Heart left ventricle (tissue), 16 donors: ENCODE measurements at regions of chr3 and their contacts with region 1.

Region 1: DNA sequence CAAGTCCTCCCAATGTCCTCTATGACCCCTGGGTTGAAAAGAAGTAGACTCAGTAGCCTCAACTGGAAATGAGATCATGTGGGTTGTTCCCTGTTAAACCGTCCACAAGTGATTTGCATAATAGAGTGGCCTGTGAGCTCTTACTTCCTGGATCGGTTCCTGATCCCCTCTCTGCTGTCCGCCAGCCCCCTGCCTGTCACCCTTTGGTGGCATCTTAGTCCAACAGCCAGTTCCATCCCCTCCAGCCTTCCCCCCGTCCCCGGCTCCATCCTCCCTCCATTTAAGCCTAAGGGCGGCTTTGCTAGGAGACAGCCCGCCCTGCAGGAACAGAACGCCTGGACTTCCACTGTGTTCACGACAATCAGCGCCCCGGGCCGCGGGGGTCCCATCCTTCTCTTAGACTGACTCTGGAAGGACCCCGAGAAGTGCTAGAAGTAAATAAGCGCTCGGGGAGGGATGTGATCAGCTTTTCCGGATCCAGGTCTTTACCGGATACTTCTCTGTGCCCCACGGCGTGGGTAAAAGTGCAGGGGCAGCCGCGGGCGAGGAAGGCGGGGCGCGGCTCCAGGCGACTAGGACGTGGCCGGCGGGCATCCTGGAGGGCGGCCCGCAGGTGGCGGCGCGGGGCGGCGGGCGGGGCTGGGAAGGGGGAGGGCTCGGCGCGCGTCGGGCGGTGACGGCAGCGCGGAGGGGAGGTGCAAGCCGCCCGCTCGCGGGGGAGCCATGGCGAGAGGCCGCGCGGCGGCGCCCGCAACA is 51.2 kb upstream of the ULK4 start:
- DNase-seq: peak; percentile 79 to 91 (median 84)
- ATAC-seq: peak; percentile 50 to 88 (median 80)
- H3K4me3 ChIP-seq: peak overlapping the region; percentile 28 to 99 (median 93)
- H3K27ac ChIP-seq: peak overlapping the region; percentile 88 to 97 (median 94)
- H3K4me1 ChIP-seq: peaks cover 0 to 51% (median 35%) of the 10 kb centered on the region in 12 donors
- H3K27me3 ChIP-seq: no peaks in the 10 kb centered on the region
- CTCF ChIP-seq: no peak
- POLR2A ChIP-seq: no peak

Region 2: GRCh38 chr3:41900265-41900664 is 112.8 kb before region 1 on chr3:
- intact Hi-C with region 1: loop called in 2 of 10 experiments (anchors 5 to 10 kb)
- DNase-seq: no peak
- ATAC-seq: no peak
- H3K4me3 ChIP-seq: no peak overlapping the region
- H3K27ac ChIP-seq: no peak overlapping the region
- H3K4me1 ChIP-seq: peaks cover 0 to 8% (median 0%) of the 10 kb centered on the region in 12 donors
- H3K27me3 ChIP-seq: no peaks in the 10 kb centered on the region
- CTCF ChIP-seq: no peak
- POLR2A ChIP-seq: no peak

Region 3: GRCh38 chr3:41961750-41962679 is 51.1 kb before region 1 on chr3 and contains the start of gene ULK4:
- intact Hi-C with region 1: loop called in 9 of 10 experiments (anchors 2 to 10 kb)
- DNase-seq: peak; percentile 97 to 99 (median 98)
- ATAC-seq: peak; percentile 98
- H3K4me3 ChIP-seq: peak within 1 kb of the TSS; percentile 75 to 98 (median 88)
- H3K27ac ChIP-seq: peak within 1 kb of the TSS in 11 of 12 donors; percentile 52 to 86 (median 75)
- H3K4me1 ChIP-seq: peaks cover 0 to 15% (median 9%) of the 10 kb centered on the region in 12 donors
- H3K27me3 ChIP-seq: no peaks in the 10 kb centered on the region
- CTCF ChIP-seq: no peak
- POLR2A ChIP-seq: peak in 1 of 2 donors; percentile 60
- total RNA-seq, gene ULK4: 1.8 to 6.1 (median 3.7) TPM

Region 4: DNA sequence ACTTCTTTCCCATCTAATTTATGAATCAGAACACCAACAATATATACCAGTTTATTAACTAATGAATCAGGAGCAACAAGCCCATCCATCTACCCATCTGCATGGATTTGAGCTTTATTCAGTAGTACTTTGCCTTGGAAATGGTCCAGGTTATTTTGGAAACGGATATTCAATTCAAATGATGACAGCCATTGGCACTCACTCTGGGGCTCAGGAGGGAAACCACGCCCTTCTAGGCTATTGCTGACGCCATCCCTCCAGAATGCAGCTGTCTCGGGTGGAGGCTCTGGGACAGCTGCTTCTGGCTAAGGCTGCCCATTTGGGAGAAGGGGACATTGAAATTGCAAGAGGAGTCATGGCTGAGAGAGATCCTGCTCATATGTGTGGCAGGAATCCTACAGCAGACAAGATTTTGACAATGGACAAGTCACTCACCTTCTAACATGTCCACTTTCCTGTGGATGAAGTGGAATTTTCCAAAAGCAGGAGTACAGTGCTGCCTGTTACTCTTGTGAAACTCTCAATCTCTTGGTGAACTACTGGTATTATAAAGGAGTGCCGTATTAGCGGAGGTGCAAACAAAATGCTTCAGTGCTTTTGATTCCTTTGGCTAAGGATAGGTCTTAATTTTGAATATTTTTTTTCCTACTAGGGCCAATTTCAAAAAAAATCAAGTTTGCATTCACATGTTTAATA is 48.7 kb after region 1 on chr3:
- intact Hi-C with region 1: loop called in 4 of 10 experiments (anchors 2 to 5 kb)
- DNase-seq: peak; percentile 85 to 92 (median 91)
- ATAC-seq: peak; percentile 91 to 93 (median 91)
- H3K4me3 ChIP-seq: peak overlapping the region in 8 of 12 donors; percentile 7 to 35 (median 17)
- H3K27ac ChIP-seq: peak overlapping the region; percentile 84 to 94 (median 89)
- H3K4me1 ChIP-seq: peaks cover 22 to 99% (median 90%) of the 10 kb centered on the region in 12 donors
- H3K27me3 ChIP-seq: no peaks in the 10 kb centered on the region
- CTCF ChIP-seq: no peak
- POLR2A ChIP-seq: peak in 1 of 2 donors; percentile 61

Region 5: DNA sequence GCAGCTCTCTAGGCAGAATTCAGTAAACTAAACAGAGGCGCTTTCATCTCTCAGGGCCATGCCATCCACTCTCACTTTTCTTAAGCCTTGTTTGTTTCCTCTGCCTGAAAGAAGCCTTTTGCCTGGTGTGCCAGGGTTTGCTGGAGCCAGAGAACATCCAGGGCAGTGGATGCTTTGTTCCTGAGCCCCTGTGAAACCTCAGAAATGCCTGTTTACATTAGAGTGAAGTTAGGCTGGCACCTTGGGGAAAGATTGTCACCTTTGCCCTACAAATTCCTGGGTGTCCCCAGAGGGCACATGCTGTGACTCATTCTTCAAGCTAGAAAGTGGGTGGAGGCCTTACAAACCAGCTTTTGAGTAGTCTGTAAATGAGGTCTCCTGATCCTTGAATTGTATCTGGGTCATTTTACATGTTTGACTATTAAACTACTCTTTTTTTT is 67.4 kb after region 1 on chr3:
- intact Hi-C with region 1: loop called in 2 of 10 experiments (anchors 5 kb)
- DNase-seq: peak in 1 of 5 donors; percentile 14
- ATAC-seq: peak; percentile 26 to 53 (median 32)
- H3K4me3 ChIP-seq: no peak overlapping the region
- H3K27ac ChIP-seq: peak overlapping the region; percentile 41 to 88 (median 65)
- H3K4me1 ChIP-seq: peaks cover 8 to 71% (median 56%) of the 10 kb centered on the region in 12 donors
- H3K27me3 ChIP-seq: no peaks in the 10 kb centered on the region
- CTCF ChIP-seq: no peak
- POLR2A ChIP-seq: no peak

Region 6: DNA sequence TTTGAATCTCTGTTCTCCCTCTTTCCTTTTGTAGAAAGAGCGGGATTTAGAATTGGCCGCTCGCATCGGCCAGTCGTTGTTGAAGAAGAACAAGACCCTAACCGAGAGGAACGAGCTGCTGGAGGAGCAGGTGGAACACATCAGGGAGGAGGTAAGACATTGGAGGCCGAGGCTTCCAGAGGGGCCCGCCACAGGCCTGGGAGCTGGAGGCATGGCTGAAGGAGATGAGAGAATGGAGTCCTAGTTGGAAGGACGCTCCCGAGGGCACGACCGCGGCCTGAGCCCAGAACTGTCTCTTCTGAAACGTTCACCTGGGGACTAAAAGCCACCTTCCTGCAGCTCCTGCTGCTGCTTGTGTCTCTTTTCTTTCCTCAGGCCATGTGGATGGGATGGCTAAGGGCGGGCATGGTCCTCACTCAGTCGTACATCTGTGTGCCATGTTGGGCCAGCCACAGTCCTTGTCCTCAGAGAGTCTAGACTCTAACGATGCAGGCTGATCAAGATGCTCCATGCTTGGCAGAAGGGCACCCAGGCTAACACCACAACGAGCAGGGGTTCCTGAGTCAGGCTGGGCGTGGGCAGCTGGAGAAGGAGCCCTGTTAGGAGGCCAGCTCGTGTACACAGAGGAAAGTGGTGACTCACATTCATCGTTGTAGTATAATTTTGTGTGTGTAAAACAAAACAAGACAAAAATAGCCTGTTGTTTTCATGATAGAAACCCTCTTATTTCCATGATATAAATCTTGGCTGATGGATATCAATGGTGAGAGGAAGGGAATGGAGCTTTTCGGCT is 171.7 kb after region 1 on chr3:
- intact Hi-C with region 1: loop called in 7 of 10 experiments (anchors 5 to 10 kb)
- DNase-seq: no peak
- ATAC-seq: no peak
- H3K4me3 ChIP-seq: no peak overlapping the region
- H3K27ac ChIP-seq: peak overlapping the region in 1 of 12 donors; percentile 8
- H3K4me1 ChIP-seq: peaks cover under 1 to 81% (median 41%) of the 10 kb centered on the region in 12 donors
- H3K27me3 ChIP-seq: no peaks in the 10 kb centered on the region
- CTCF ChIP-seq: no peak
- POLR2A ChIP-seq: no peak